HCT116 (cell line): ENCODE measurements at regions of chr9 and their contacts with region 1.

Region 1: DNA sequence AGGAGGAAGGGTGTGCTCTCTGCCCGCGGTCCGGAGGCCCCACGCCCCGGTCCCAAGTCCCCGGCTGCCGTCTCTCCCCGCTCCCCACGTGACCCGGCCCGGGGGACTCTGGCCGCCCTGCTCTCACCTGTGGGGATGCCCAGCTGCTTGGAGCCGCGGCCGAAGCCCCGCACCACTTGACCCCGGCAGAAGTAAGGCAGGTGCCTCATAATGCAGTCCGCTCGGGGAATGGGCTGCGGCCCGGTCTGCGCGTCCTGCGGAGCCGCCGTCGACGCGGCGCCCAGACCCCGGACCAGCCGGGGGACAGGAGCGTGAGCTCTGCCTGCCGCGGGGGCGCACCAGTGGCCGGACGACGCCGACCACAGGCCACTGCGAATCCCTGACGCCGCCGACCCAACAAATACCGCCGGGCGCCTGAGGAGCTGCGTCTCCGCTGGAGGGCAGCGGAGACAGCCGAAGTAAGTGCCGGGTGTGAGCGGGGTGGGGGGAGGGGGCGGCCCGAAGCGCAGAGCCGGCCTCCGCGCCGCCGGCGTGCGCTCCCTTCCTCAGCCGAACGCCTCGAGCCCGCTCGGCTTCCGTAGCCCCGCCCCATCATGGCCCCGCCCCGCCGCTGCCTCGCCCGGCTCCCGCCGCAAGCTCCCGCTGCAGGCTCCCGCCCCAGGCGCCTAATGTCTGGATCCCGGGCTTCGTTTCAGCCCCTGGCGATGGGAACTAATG is at the start of gene RFK:
- DNase-seq: peak; percentile 82
- ATAC-seq: peak; percentile 93
- H3K4me3 ChIP-seq: peak within 1 kb of the TSS; percentile 85 to 88
- H3K27ac ChIP-seq: peak within 1 kb of the TSS; percentile 96
- H3K4me1 ChIP-seq: peaks cover 0 to 12% of the 10 kb centered on the region in 2 experiments; a peak in 3 of 4 replicates
- H3K27me3 ChIP-seq: no peaks in the 10 kb centered on the region
- CTCF ChIP-seq: peak in 2 of 3 experiments; percentile 19 to 56; a peak in 3 of 6 replicates
- POLR2A ChIP-seq: peak; percentile 54
- RAD21 ChIP-seq: peak; percentile 66
- total RNA-seq, gene RFK: 35.0 TPM

Region 2: DNA sequence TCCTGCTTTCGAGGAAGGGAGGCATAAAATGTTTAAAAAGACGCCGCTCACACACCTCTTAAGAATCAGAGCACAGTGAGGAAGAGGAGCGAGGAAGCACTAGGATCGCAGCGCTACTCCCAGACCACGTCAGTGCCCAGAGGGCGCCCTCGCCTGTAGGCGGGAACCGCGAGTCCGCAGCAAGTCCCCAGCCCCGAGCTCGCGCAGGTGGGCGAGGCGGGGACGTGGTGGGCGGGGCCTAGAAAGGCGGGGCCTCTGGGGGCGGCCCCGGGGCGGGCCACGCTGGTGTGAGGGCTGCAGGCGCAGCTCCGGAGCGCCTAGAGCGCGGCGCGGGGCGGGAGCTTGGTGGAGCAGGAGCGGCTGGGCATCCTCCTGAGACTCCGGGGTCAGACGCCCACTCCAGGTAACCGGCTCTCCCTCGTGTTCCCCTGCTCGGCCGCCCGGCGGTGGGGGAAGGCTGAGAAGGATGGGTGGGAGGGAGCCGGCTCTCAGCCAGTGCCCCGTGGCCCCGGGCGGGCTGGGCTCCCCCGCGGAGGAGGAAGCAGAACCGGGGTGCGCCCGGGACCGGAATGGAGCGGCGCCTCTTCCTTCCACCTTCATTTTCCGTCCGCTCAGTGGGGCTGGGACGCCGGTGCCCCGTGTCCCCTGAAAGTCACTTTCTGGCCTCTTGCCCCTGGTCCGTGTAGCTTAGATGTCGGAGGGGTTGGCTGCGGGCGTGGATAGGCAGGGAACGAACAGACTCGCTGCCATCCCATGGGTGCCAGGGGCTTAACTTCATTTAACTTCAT is 65.0 kb after region 1 on chr9 and contains the start of gene GCNT1:
- CTCF ChIA-PET with region 1: no interaction called
- POLR2A ChIA-PET with region 1: no interaction called
- RAD21 ChIA-PET with region 1: no interaction called
- intact Hi-C with region 1: loop called (anchors 5 kb)
- DNase-seq: peak; percentile 85
- ATAC-seq: peak; percentile 93
- H3K4me3 ChIP-seq: peak within 1 kb of the TSS; percentile 78 to 84
- H3K27ac ChIP-seq: peak within 1 kb of the TSS; percentile 53
- H3K4me1 ChIP-seq: peaks cover 18 to 30% of the 10 kb centered on the region in 2 experiments; a peak in 3 of 4 replicates
- H3K27me3 ChIP-seq: no peaks in the 10 kb centered on the region
- CTCF ChIP-seq: peak; percentile 37 to 40 (median 39); a peak in 2 of 6 replicates
- POLR2A ChIP-seq: no peak
- RAD21 ChIP-seq: peak; percentile 54; the same call in 1 of the 2 replicates
- total RNA-seq, gene GCNT1: 5.8 TPM